ENCODE measurements at regions of chr12 and their contacts with region 1.

Region 1: DNA sequence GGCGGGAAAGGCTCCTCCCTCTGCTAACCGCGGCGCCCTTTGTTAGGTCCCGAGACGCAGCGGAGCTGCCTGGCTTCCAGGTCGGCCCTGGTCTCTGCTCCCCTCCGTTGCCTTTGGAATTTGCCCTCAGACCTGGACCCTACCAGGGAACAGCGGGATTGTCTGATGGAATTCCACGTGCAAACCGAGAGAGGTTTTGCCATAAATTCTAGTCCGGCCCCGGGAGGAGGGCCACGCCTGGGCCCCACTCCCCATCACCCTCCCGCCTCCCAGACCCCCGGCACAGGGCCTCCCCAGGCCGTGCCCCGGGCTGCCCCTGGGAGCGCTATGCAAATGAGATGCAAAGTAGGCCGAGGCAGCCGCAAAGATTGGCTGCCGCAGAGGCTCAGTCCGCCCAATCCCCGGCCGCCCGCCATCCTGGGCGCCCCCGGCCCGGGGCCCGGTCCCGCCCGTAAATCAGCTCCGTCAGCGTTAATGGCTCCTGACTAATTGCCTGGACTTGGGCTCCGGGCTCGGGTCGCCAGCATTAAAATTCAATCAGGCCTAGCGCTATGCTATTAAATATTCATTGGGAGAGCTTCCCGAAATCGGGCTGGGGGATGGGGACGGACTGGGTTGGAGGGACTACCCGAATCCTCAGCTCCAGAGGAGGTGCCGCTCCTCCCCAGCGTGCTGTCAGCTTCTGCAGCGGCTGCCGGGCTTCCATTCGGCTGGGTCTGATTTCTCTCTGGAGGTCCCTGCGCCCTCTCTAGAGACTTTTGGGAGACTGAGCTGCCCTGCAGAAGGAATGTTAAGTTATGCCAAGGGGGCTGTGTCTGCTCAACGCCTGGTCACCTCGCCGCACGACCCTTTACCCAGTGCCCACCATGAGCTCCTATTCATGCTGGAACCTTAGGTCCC is 15.7 kb upstream of the FIGNL2 start:
- DNase-seq: peak; percentile 24 to 54 (median 45)
- H3K4me3 ChIP-seq: peak overlapping the region in 6 of 7 experiments; percentile 19 to 74 (median 44)
- H3K27ac ChIP-seq: no peak overlapping the region
- H3K4me1 ChIP-seq: peaks cover 0 to 42% (median 35%) of the 10 kb centered on the region in 4 experiments
- H3K27me3 ChIP-seq: peaks cover 0 to 32% (median 14%) of the 10 kb centered on the region in 5 experiments

Region 2: DNA sequence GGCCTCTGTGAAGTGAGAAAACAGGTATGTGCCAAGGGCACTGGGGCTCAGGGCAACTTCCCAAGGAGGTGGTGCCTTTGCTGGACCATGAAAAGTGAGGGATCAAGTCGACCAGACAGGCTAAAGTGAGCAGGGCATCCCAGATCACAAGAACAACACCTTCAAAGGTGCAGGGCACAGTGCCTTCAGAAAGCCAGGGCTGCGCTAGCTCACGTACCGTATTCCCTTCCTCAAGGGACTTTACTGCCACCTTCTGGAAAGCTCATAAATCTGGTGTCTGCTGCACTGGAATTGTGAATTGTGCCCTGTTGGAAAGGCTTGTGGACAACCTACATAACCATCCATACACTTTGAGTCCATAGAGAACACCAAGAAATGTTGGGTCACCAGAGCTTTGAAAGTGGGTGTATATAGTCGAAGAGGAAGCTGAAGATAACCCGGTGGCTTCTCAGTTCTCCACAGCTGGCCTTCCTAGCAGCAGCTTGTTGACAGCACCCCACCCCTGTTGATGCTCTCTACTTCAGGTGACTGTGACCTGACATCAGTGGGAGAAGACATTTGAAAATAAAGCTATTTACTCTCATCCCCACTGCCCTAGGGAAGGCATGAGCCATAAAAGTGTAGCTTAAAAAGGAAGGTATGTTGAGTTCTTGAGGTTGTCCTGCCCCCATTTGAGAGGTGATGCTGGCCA is 40.2 kb before region 1 on chr12:
- CTCF ChIA-PET with region 1: interaction called, 62 read pairs
- POLR2A ChIA-PET with region 1: interaction called, 3 read pairs
- DNase-seq: peak; percentile 61 to 70 (median 66)
- H3K4me3 ChIP-seq: no peak overlapping the region
- H3K27ac ChIP-seq: no peak overlapping the region
- H3K4me1 ChIP-seq: peaks cover 4 to 50% (median 49%) of the 10 kb centered on the region in 4 experiments
- H3K27me3 ChIP-seq: no peaks in the 10 kb centered on the region

Region 3: GRCh38 chr12:51848841-51849735 is 15.1 kb before region 1 on chr12:
- CTCF ChIA-PET with region 1: interaction called, 32 read pairs
- POLR2A ChIA-PET with region 1: no interaction called
- DNase-seq: no peak
- H3K4me3 ChIP-seq: no peak overlapping the region
- H3K27ac ChIP-seq: no peak overlapping the region
- H3K4me1 ChIP-seq: peaks cover 0 to 55% (median 42%) of the 10 kb centered on the region in 4 experiments
- H3K27me3 ChIP-seq: peaks cover 0 to 31% (median 9%) of the 10 kb centered on the region in 5 experiments

Region 4: DNA sequence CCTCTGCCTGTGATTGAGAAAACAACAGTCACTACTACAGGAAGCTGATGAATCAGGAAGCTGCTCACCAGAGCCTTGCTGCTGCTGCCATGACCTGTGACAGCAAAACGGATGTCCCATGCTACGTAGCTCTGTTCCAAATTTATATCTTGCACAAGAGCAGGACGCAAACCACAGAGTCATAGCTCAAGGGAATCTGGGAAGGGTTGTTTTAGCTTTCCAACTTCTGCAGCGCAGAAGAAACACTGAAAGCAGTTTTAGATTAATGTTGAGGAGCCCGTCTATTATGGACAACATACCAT is 21.8 kb after region 1 on chr12:
- CTCF ChIA-PET with region 1: interaction called, 25 read pairs
- POLR2A ChIA-PET with region 1: no interaction called
- DNase-seq: peak; percentile 80 to 91 (median 89)
- H3K4me3 ChIP-seq: peak overlapping the region in 4 of 7 experiments; percentile 6 to 40 (median 23)
- H3K27ac ChIP-seq: peak overlapping the region in 1 of 2 experiments; percentile 43
- H3K4me1 ChIP-seq: peaks cover 8 to 20% (median 15%) of the 10 kb centered on the region in 4 experiments
- H3K27me3 ChIP-seq: no peaks in the 10 kb centered on the region

Region 5: DNA sequence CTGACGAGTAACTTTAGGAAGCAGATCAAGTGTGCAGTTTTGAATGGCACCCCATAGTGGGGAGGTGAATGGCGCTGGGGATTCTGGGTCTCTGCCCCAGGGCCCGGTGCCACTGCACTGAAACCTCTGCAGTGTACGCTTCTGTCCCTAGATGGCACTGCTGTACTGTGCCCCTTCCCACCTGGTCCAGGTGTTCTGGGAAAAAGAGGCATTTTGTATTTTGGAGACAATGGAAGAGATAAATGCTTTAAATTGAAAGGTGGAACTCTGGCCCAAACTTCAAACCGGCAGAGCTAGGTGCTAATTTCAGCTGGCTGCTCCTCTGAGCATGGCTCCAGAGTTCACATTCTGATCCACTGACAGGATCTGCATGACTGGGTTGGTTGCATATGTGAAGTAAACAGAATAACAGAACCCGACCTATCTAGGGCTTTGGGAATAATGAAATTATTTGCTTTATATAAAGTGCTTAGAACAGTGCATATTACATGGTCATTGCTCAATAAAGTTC is 275.4 kb after region 1 on chr12:
- CTCF ChIA-PET with region 1: no interaction called
- POLR2A ChIA-PET with region 1: no interaction called
- DNase-seq: no peak
- H3K4me3 ChIP-seq: no peak overlapping the region
- H3K27ac ChIP-seq: no peak overlapping the region
- H3K4me1 ChIP-seq: peaks cover 0 to 4% (median 0%) of the 10 kb centered on the region in 4 experiments
- H3K27me3 ChIP-seq: peaks cover 0 to 7% (median 0%) of the 10 kb centered on the region in 5 experiments